Sigmoid colon (tissue), 7 donors: ENCODE measurements at regions of chr9 and their contacts with region 1.

Region 1: GRCh38 chr9:83646500-83647239 is 23.7 kb downstream of the IDNK start:
- DNase-seq: no peak
- H3K4me3 ChIP-seq: no peak overlapping the region
- H3K27ac ChIP-seq: no peak overlapping the region
- H3K4me1 ChIP-seq: no peaks in the 10 kb centered on the region
- H3K27me3 ChIP-seq: no peaks in the 10 kb centered on the region
- CTCF ChIP-seq: no peak
- EP300 ChIP-seq: no peak
- POLR2A ChIP-seq: no peak

Region 2: DNA sequence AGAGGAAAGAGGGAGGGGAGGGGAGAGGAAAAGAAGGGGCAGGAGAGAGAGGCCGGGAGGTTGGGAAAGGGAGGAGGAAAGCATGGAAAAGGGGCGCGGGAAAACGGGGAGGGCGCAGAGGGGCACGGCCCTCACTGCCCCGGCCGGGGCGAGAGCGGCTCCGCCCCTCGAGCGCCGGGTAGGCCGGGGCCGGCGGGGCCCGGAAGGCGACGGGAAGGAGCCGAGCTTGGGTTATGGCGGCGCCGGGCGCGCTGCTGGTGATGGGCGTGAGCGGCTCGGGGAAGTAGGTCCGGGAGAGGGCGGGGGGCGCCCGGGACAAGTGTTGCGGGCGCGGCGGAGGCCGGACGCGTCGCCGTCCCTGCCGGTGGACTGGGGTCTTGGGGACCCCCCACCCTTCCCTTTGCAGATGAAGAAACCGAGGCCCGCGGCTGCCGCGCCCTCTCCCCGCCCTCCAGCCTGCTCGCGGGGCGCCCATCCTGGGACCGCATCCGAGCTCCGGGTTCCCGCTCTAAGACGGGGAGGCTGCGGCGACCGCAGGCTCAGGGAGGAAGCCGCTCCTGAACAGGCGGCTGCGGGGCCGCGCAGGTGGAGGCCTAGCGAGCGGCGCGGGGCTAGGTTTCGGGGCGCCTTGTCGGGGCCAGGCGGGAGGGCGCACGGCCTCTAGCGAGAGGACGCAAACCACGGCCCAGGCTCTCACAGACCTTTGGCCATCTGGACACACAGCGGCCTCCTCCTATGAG is 23.6 kb before region 1 on chr9 and contains the start of gene IDNK:
- intact Hi-C with region 1: loop called (anchors 2 kb)
- DNase-seq: peak; percentile 78
- H3K4me3 ChIP-seq: peak within 1 kb of the TSS; percentile 69 to 86 (median 75)
- H3K27ac ChIP-seq: peak within 1 kb of the TSS; percentile 86 to 90 (median 88)
- H3K4me1 ChIP-seq: peaks cover 0 to 17% (median 6%) of the 10 kb centered on the region in 4 donors
- H3K27me3 ChIP-seq: no peaks in the 10 kb centered on the region
- CTCF ChIP-seq: no peak
- EP300 ChIP-seq: no peak
- POLR2A ChIP-seq: no peak
- total RNA-seq, gene IDNK: 3.3 to 11.8 (median 5.9) TPM

Region 3: DNA sequence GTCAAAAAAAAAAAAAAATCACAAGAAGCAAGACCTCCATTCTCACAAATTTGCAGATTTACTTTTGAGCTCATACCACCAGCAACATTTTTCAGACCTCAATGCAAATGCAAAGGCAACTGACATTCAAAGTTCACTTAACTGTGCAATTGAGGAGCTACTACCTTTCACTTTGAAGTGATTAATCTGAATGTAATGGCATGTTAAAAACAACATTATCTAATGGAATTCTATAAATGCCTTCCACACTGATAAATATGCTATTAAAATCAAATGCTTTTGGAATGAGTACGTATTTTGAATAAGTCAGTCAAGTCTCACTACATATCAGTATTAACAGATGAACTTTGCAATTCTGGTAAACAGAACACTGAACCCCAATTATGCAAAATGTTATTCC is 28.8 kb after region 1 on chr9:
- intact Hi-C with region 1: no loop called
- DNase-seq: no peak
- H3K4me3 ChIP-seq: no peak overlapping the region
- H3K27ac ChIP-seq: no peak overlapping the region
- H3K4me1 ChIP-seq: no peaks in the 10 kb centered on the region
- H3K27me3 ChIP-seq: no peaks in the 10 kb centered on the region
- CTCF ChIP-seq: no peak
- EP300 ChIP-seq: no peak
- POLR2A ChIP-seq: no peak